ENCODE measurements at regions of chr4 and their contacts with region 1.

Region 1: GRCh38 chr4:102344954-102345794 is at the start of gene SLC39A8:
- DNase-seq: peak; percentile 93
- H3K4me3 ChIP-seq: peak within 1 kb of the TSS; percentile 78
- H3K27ac ChIP-seq: peak within 1 kb of the TSS; percentile 94
- H3K4me1 ChIP-seq: peaks cover 42% of the 10 kb centered on the region
- CTCF ChIP-seq: peak; percentile 84
- total RNA-seq, gene SLC39A8: 29.2 and 35.4 TPM in 2 replicates

Region 2: DNA sequence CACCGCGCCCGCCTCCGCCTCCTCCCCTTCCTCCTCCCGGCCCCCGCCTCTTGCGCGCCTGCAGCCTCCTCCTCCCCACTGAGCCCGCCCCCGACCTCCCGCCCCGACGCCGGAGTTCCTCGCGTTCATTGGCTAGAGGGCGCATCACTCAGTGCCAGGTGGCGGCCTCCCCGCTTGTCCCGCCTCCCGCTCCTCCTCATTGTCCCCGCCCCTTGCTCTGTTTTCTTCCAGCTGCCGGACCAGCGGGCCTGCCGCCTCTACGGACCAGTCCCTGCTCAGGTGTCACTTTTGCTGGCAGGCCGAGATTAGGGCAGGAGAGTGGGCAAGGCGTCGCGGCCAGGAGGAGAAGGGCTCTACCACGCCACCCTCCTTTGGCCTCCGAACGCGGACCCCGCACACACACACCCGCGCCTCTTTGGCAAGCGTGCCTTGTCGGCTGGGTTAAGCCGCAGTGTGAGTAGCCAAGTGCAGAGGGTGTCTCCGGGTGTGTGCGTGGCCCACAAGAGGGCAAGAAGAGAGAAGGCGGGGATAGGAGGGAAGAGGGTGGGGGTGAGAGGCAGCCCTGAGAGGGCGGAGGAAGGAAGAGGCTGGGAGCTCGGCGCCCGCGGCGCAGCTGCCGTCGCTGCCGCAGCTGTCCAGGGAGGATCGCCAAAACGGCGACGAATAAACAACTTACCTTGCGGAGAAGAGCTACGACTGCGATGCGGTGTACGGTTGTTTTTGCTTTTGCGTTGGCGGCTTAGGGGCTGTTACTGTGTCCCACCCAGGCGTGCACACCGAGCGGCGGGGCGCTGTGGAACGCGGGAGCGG is 997.4 kb before region 1 on chr4:
- CTCF ChIA-PET with region 1: no interaction called
- POLR2A ChIA-PET with region 1: no interaction called
- intact Hi-C with region 1: loop called (anchors 5 kb)
- DNase-seq: peak; percentile 95
- H3K4me3 ChIP-seq: peak overlapping the region; percentile 75
- H3K27ac ChIP-seq: peak overlapping the region; percentile 73
- H3K4me1 ChIP-seq: peaks cover 20% of the 10 kb centered on the region
- CTCF ChIP-seq: peak; percentile 40

Region 3: GRCh38 chr4:102163404-102164140 is 181.6 kb before region 1 on chr4:
- CTCF ChIA-PET with region 1: no interaction called
- POLR2A ChIA-PET with region 1: no interaction called
- intact Hi-C with region 1: no loop called
- DNase-seq: no peak
- H3K4me3 ChIP-seq: no peak overlapping the region
- H3K27ac ChIP-seq: no peak overlapping the region
- H3K4me1 ChIP-seq: no peaks in the 10 kb centered on the region
- CTCF ChIP-seq: no peak

Region 4: GRCh38 chr4:102308031-102308799 is 37.0 kb before region 1 on chr4:
- CTCF ChIA-PET with region 1: no interaction called
- POLR2A ChIA-PET with region 1: interaction called, 4 read pairs
- intact Hi-C with region 1: loop called (anchors 1 kb)
- DNase-seq: peak; percentile 73
- H3K4me3 ChIP-seq: no peak overlapping the region
- H3K27ac ChIP-seq: peak overlapping the region; percentile 20
- H3K4me1 ChIP-seq: peaks cover 21% of the 10 kb centered on the region
- CTCF ChIP-seq: no peak

Region 5: GRCh38 chr4:102500696-102501446 is 155.7 kb after region 1 on chr4 and contains the start of gene NFKB1:
- CTCF ChIA-PET with region 1: no interaction called
- POLR2A ChIA-PET with region 1: interaction called, 5 read pairs
- intact Hi-C with region 1: loop called (anchors 2 kb)
- DNase-seq: peak; percentile 78
- H3K4me3 ChIP-seq: peak within 1 kb of the TSS; percentile 97
- H3K27ac ChIP-seq: peak within 1 kb of the TSS; percentile 77
- H3K4me1 ChIP-seq: peaks cover 26% of the 10 kb centered on the region
- CTCF ChIP-seq: no peak
- total RNA-seq, gene NFKB1: 20.7 and 23.1 TPM in 2 replicates

Region 6: GRCh38 chr4:103075901-103076739 is 730.9 kb after region 1 on chr4:
- CTCF ChIA-PET with region 1: no interaction called
- POLR2A ChIA-PET with region 1: no interaction called
- intact Hi-C with region 1: loop called (anchors 2 kb)
- DNase-seq: peak; percentile 79
- H3K4me3 ChIP-seq: peak overlapping the region; percentile 79
- H3K27ac ChIP-seq: peak overlapping the region; percentile 86
- H3K4me1 ChIP-seq: peaks cover 51% of the 10 kb centered on the region
- CTCF ChIP-seq: peak; percentile 39; the same call in 1 of the 2 replicates